Stomach (tissue), 19 donors: ENCODE measurements at regions of chr3 and their contacts with region 1.

Region 1: DNA sequence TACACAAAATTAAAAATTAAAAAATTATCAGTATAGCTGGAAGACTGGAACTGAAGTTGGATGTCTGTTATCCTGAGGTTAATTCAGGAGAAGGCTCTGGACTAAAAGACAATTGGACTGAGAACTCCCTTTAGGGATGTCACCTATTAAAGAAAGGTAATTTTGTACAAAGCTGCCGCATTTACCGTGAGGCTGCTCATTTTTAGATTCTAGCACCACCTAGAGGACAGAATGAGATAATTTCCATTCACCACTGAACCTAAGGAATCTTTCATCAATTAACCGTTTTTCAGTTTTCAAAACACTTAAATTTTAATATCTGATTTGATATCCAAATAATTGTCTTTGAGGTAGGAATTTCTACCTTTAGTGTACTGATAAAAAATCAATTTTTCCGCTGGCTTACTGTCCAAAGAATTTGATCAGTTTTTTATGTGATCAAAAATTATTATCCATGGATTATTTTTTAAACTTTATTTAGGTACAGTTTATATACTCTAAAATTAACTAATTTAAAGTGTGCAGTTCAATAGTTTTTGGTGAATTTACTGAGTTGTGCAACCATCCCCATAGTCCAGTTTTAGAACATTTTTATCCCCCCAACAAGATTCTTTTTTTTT is 106.7 kb upstream of the TNIK start:
- DNase-seq: peak in 1 of 2 donors; percentile 74
- H3K4me3 ChIP-seq: no peak overlapping the region
- H3K27ac ChIP-seq: no peak overlapping the region
- H3K4me1 ChIP-seq: peaks cover 0 to 9% (median 0%) of the 10 kb centered on the region in 4 donors
- H3K27me3 ChIP-seq: no peaks in the 10 kb centered on the region
- CTCF ChIP-seq: peak in 5 of 7 experiments; percentile 52 to 77 (median 73)
- EP300 ChIP-seq: no peak
- POLR2A ChIP-seq: no peak

Region 2: GRCh38 chr3:171049861-171050444 is 517.0 kb before region 1 on chr3:
- intact Hi-C with region 1: loop called (anchors 10 kb)
- DNase-seq: peak; percentile 54 to 76
- H3K4me3 ChIP-seq: no peak overlapping the region
- H3K27ac ChIP-seq: no peak overlapping the region
- H3K4me1 ChIP-seq: peaks cover 0 to under 1% (median 0%) of the 10 kb centered on the region in 4 donors
- H3K27me3 ChIP-seq: no peaks in the 10 kb centered on the region
- CTCF ChIP-seq: peak in 5 of 7 experiments; percentile 12 to 59 (median 39)
- EP300 ChIP-seq: no peak
- POLR2A ChIP-seq: no peak

Region 3: DNA sequence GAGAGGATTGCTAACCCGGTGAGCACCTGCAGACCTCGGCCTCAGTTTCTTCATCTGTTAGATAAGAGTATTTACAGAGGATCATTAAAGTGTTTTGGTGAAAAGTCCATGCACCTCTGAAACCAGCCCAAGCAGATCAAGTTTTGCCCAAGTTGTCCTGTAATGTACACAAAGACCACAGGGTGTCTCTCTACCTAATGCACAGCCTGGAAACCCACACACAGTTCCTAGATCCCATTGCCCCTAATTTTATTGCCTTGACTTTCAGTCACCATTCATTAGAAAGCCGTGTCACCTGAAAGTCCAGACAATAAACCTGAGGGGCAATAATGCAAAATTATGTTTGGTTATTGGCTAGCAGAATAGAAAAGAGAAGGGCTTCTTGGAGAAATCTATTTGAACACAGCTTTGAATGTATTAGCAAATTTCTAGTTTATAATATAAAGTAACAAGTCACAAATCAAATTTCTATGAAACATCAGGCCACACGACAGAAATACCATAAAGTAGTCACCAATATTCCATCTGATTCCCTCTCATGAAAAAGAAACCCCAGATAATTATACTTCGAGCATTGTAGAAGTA is 379.1 kb before region 1 on chr3:
- intact Hi-C with region 1: loop called (anchors 10 kb)
- DNase-seq: peak in 1 of 2 donors; percentile 69
- H3K4me3 ChIP-seq: no peak overlapping the region
- H3K27ac ChIP-seq: no peak overlapping the region
- H3K4me1 ChIP-seq: peaks cover 0 to 37% (median 12%) of the 10 kb centered on the region in 4 donors
- H3K27me3 ChIP-seq: no peaks in the 10 kb centered on the region
- CTCF ChIP-seq: peak in 5 of 7 experiments; percentile 23 to 56 (median 47)
- EP300 ChIP-seq: no peak
- POLR2A ChIP-seq: no peak